ENCODE measurements at regions of chr15 and their contacts with region 1.

Region 1: GRCh38 chr15:65610871-65611718 is at the start of gene INTS14:
- DNase-seq: peak; percentile 82 to 98
- H3K4me3 ChIP-seq: peak within 1 kb of the TSS; percentile 96 to 100
- H3K27ac ChIP-seq: peak within 1 kb of the TSS; percentile 89 to 97
- H3K4me1 ChIP-seq: peaks cover 10 to 19% of the 10 kb centered on the region in 2 donors
- H3K27me3 ChIP-seq: no peaks in the 10 kb centered on the region
- CTCF ChIP-seq: peak in 2 of 3 experiments; percentile 48 to 57
- total RNA-seq, gene INTS14: 14.5 TPM

Region 2: DNA sequence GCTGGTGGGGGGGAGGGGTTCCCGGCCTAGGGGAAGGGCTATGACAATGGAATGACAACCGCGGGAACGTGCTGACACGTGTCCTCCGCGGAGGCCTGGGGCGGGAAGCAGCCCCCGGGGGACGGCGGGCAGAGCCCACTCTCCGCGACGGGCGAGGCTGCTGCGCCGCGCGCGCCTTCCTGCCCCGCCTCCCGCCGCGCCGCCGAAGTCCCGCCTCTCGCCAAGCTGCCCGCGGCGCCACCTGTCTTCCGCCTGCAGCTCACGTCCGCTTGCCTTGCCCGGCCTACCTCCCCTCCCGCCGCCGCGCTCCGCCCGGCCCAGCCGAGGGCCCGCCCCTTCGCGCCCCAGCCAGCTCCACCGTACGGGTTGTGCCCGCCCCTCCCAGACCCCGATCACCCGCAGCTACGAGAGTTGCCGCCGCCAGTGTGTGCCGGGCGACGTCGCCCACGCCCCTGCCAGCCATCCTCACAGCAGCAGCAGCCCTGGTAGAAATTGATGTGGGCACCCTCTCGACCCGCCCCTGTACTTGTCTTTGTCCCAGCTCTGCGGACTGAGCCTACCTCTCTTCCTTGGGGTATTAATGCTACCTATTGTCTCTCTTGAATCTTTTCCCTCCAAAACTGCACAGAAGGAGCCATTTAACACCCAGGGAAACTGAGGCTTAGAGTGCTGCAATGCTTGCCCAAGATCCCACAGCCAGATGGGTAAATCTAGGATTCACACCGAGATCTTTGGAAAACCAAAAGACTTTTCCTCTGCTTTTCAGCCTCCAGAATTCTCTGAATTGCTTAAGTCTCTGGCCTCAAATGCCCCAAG is 324.2 kb before region 1 on chr15 and contains the start of gene PARP16:
- intact Hi-C with region 1: loop called (anchors 5 kb)
- DNase-seq: peak; percentile 76 to 95
- H3K4me3 ChIP-seq: peak within 1 kb of the TSS; percentile 85 to 95
- H3K27ac ChIP-seq: peak within 1 kb of the TSS; percentile 87 to 92
- H3K4me1 ChIP-seq: peaks cover 0 to 19% of the 10 kb centered on the region in 2 donors
- H3K27me3 ChIP-seq: no peaks in the 10 kb centered on the region
- CTCF ChIP-seq: peak; percentile 33 to 62 (median 52)
- total RNA-seq, gene PARP16: 2.9 TPM

Region 3: DNA sequence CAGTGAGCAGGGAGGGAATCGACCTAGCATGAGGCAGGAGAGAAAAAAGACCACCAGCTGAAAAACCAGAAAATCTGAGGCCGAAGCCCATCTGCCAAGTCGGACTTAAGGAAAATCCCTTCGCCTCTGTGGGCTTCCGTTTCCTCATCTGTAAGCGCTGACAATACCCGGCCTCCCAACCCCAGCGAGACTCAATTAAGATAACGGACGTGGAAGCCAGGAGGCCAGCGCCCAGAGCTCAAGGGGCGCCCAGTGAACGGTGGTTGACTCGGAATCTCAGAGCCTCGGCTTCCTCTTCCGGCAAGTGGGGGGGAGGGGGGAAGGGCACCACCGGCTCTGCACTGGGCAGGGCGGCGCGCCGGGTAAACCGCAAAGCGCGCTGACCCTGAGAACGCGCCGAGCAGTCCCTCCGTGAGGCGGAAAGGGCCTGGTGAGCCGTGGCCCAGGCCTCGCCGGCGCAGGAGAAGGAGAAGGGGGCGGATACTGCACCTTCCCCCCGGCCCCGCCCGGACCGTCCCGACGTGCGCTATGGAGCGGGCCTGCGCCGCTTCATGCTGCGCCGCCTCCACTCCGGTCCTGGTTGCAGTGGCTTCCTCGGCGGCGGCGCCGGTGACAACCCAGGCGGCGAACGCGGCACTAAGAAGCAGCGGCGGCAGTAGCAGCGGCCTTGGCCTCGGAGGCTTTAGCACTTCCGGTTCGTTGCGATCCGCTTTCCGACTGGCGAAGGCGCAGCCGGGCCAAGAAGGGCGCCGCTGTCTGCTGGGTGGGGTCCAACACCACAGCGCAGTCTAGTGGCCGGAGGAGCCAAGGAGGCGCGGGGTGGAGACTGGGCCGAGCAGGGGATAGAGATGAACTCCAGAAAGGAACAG is 93.9 kb before region 1 on chr15 and contains the start of gene DPP8:
- intact Hi-C with region 1: loop called (anchors 1 kb)
- DNase-seq: peak; percentile 60 to 95
- H3K4me3 ChIP-seq: peak within 1 kb of the TSS; percentile 97 to 98
- H3K27ac ChIP-seq: peak within 1 kb of the TSS; percentile 87 to 93
- H3K4me1 ChIP-seq: peaks cover 4 to 26% of the 10 kb centered on the region in 2 donors
- H3K27me3 ChIP-seq: no peaks in the 10 kb centered on the region
- CTCF ChIP-seq: peak; percentile 81 to 96 (median 93)
- total RNA-seq, gene DPP8: 69.0 TPM

Region 4: GRCh38 chr15:65530314-65531122 is 80.6 kb before region 1 on chr15 and contains the start of gene HACD3:
- intact Hi-C with region 1: loop called (anchors 5 kb)
- DNase-seq: peak; percentile 26 to 91
- H3K4me3 ChIP-seq: peak within 1 kb of the TSS; percentile 85 to 96
- H3K27ac ChIP-seq: peak within 1 kb of the TSS; percentile 44 to 55
- H3K4me1 ChIP-seq: peaks cover 0 to 12% of the 10 kb centered on the region in 2 donors
- H3K27me3 ChIP-seq: no peaks in the 10 kb centered on the region
- CTCF ChIP-seq: no peak
- total RNA-seq, gene HACD3: 46.2 TPM

Region 5: DNA sequence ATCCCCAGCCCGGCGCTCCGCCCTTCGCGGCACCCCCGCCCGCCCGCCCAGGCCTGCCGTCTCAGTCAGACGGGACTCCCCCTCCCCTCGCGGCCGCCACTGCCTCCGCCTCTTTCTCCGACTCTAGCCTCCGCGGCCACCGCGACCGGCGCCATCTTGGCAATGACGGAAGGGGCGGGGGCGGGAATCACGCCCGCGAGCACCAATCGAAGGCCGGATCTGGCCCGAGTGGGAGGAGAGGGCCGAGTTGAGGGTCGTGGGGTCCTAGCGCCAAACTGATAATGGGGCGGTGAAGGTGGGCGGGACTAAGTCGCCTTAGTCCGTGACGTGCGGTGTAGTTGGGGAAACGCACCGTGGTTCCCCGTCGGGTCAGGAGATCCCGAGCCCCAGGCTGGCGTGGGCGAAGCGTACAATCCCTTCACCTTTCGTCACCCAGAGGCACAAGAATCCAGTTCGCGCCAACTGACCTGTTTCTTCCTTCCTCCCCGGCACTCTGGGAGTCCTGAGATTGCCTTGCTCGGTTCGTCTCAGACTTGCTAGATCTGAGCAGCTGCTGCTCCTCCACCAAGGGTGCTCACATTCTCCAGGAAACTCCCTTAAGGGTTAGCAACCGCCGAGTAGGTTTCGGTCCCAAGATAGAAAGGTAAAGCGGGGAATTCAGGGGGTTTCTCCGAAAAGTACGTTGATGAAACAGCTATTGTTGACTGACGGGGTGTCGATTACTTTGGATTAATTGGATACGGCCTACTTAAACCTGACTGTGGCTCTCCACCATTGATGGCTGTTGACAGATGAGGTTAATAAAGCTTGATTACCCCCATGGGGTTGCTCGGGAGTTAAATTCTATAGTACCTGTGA is 181.3 kb after region 1 on chr15 and contains the start of gene DENND4A:
- intact Hi-C with region 1: loop called (anchors 5 kb)
- DNase-seq: peak; percentile 96 to 99
- H3K4me3 ChIP-seq: peak within 1 kb of the TSS; percentile 84 to 99
- H3K27ac ChIP-seq: peak within 1 kb of the TSS; percentile 98
- H3K4me1 ChIP-seq: peaks cover 5 to 14% of the 10 kb centered on the region in 2 donors
- H3K27me3 ChIP-seq: no peaks in the 10 kb centered on the region
- CTCF ChIP-seq: no peak
- total RNA-seq, gene DENND4A: 21.9 TPM

Region 6: DNA sequence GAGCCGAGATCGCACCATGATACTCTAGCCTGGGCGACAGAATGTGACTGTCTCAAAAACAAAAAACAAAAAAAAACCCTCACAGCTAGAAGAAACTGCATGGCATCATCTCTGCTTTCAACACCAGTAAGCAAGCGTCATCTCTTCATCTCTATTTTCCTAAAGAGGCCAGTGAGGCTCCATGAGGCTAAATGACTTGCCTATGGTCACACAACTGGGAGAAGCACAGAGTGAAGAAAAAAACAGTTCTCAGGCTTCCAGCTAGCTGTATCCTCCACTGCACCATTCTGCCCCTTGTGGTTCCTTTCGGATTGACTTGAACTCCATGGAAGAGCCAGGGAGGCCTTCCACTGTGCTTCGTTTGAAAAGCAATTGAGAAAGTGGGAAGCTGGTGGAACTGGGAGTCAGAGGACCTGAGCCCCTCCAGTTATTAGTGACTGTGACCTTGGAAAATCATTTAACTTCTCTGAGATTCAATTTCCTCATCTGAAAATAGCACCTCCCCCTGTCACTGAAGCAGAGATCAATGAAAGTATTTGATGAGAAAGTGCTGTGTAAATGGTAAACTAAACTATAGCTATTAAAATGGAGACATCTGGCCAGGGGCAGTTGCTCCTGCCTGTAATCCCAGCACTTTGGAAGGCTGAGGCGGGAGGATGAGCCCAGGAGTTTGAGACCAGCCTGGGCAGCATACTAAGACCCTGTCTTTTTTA is 213.1 kb after region 1 on chr15:
- intact Hi-C with region 1: no loop called
- DNase-seq: peak in 1 of 2 donors; percentile 71
- H3K4me3 ChIP-seq: no peak overlapping the region
- H3K27ac ChIP-seq: no peak overlapping the region
- H3K4me1 ChIP-seq: peaks cover 0 to 5% of the 10 kb centered on the region in 2 donors
- H3K27me3 ChIP-seq: no peaks in the 10 kb centered on the region
- CTCF ChIP-seq: peak; percentile 28 to 69 (median 49)

Region 7: GRCh38 chr15:65869127-65869953 is 258.2 kb after region 1 on chr15 and contains the start of gene RAB11A:
- intact Hi-C with region 1: loop called (anchors 1 kb)
- DNase-seq: peak; percentile 82 to 98
- H3K4me3 ChIP-seq: peak within 1 kb of the TSS; percentile 86 to 96
- H3K27ac ChIP-seq: peak within 1 kb of the TSS; percentile 95 to 97
- H3K4me1 ChIP-seq: peaks cover 3 to 5% of the 10 kb centered on the region in 2 donors
- H3K27me3 ChIP-seq: no peaks in the 10 kb centered on the region
- CTCF ChIP-seq: peak; percentile 15 to 46 (median 33)
- total RNA-seq, gene RAB11A: 192 TPM

Region 8: GRCh38 chr15:66497502-66498455 is 886.7 kb after region 1 on chr15 and contains the start of gene SNAPC5:
- intact Hi-C with region 1: loop called (anchors 10 kb)
- DNase-seq: peak; percentile 87 to 99
- H3K4me3 ChIP-seq: peak within 1 kb of the TSS; percentile 67 to 94
- H3K27ac ChIP-seq: peak within 1 kb of the TSS; percentile 87 to 91
- H3K4me1 ChIP-seq: peaks cover 5 to 14% of the 10 kb centered on the region in 2 donors
- H3K27me3 ChIP-seq: no peaks in the 10 kb centered on the region
- CTCF ChIP-seq: peak; percentile 95 to 98 (median 98)
- total RNA-seq, gene SNAPC5: 3.7 TPM